Activated CD4-positive, alpha-beta memory T cell treated with anti-CD3 and anti-CD28 coated beads for 36 hours (primary cell): ENCODE measurements at regions of chr11 and their contacts with region 1.

Region 1: GRCh38 chr11:15027011-15027410 is 46.4 kb upstream of the CALCB start:
- DNase-seq: no peak
- H3K4me3 Mint-ChIP-seq: no peak overlapping the region
- H3K27ac Mint-ChIP-seq: no peak overlapping the region
- H3K4me1 Mint-ChIP-seq: peaks cover 3% of the 10 kb centered on the region
- H3K27me3 Mint-ChIP-seq: peaks cover 7% of the 10 kb centered on the region

Region 2: GRCh38 chr11:15006139-15006759 is 20.8 kb before region 1 on chr11:
- CTCF ChIA-PET with region 1: interaction called, 10 read pairs
- POLR2A ChIA-PET with region 1: no interaction called
- intact Hi-C with region 1: no loop called
- DNase-seq: peak; percentile 10
- H3K4me3 Mint-ChIP-seq: no peak overlapping the region
- H3K27ac Mint-ChIP-seq: no peak overlapping the region
- H3K4me1 Mint-ChIP-seq: peaks cover 2% of the 10 kb centered on the region
- H3K27me3 Mint-ChIP-seq: peaks cover 32% of the 10 kb centered on the region

Region 3: GRCh38 chr11:15093432-15093831 is 66.4 kb after region 1 on chr11:
- CTCF ChIA-PET with region 1: no interaction called
- POLR2A ChIA-PET with region 1: no interaction called
- intact Hi-C with region 1: no loop called
- DNase-seq: no peak
- H3K4me3 Mint-ChIP-seq: no peak overlapping the region
- H3K27ac Mint-ChIP-seq: no peak overlapping the region
- H3K4me1 Mint-ChIP-seq: no peaks in the 10 kb centered on the region
- H3K27me3 Mint-ChIP-seq: peaks cover 15% of the 10 kb centered on the region